PC-9 (cell line): ENCODE measurements at regions of chr9 and their contacts with region 1.

Region 1: GRCh38 chr9:71911253-71912074 is at the start of gene C9orf85:
- DNase-seq: peak; percentile 99
- H3K4me3 ChIP-seq: peak within 1 kb of the TSS; percentile 93
- H3K27ac ChIP-seq: peak within 1 kb of the TSS; percentile 77
- H3K4me1 ChIP-seq: peaks cover 32% of the 10 kb centered on the region
- H3K27me3 ChIP-seq: no peaks in the 10 kb centered on the region
- CTCF ChIP-seq: no peak
- total RNA-seq, gene C9orf85: 16.8 and 19.0 TPM in 2 replicates

Region 2: GRCh38 chr9:71683598-71684235 is 227.7 kb before region 1 on chr9:
- CTCF ChIA-PET with region 1: no interaction called
- POLR2A ChIA-PET with region 1: interaction called, 15 read pairs
- intact Hi-C with region 1: no loop called
- DNase-seq: no peak
- H3K4me3 ChIP-seq: no peak overlapping the region
- H3K27ac ChIP-seq: no peak overlapping the region
- H3K4me1 ChIP-seq: peaks cover 88% of the 10 kb centered on the region
- H3K27me3 ChIP-seq: no peaks in the 10 kb centered on the region
- CTCF ChIP-seq: no peak

Region 3: GRCh38 chr9:71858812-71859211 is 52.7 kb before region 1 on chr9:
- CTCF ChIA-PET with region 1: no interaction called
- POLR2A ChIA-PET with region 1: no interaction called
- intact Hi-C with region 1: no loop called
- DNase-seq: no peak
- H3K4me3 ChIP-seq: no peak overlapping the region
- H3K27ac ChIP-seq: no peak overlapping the region
- H3K4me1 ChIP-seq: no peaks in the 10 kb centered on the region
- H3K27me3 ChIP-seq: no peaks in the 10 kb centered on the region
- CTCF ChIP-seq: no peak

Region 4: DNA sequence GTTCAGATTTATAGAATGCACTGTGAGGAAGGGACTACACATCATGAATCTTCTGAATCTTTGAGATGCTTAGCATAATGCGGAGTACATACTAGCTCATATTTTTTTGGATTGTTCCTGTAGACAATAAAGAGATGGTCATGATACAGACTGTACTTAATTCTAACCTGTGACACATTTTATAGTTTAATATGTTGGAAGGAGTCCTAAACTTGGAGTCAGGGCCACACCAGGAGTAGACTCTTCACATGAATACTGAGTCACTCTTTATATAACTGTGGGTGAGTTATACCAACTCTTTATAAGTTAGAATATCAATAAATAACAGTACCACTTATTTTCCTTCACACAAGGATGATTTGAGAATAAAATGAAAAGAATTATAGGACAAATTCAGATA is 16.9 kb after region 1 on chr9:
- CTCF ChIA-PET with region 1: interaction called, 10 read pairs
- POLR2A ChIA-PET with region 1: interaction called, 5 read pairs
- intact Hi-C with region 1: no loop called
- DNase-seq: no peak
- H3K4me3 ChIP-seq: no peak overlapping the region
- H3K27ac ChIP-seq: no peak overlapping the region
- H3K4me1 ChIP-seq: no peaks in the 10 kb centered on the region; the same call in 1 of the 2 replicates
- H3K27me3 ChIP-seq: no peaks in the 10 kb centered on the region
- CTCF ChIP-seq: no peak

Region 5: GRCh38 chr9:71944475-71945375 is 33.3 kb after region 1 on chr9:
- CTCF ChIA-PET with region 1: no interaction called
- POLR2A ChIA-PET with region 1: no interaction called
- intact Hi-C with region 1: loop called (anchors 2 kb)
- DNase-seq: peak in 1 of 2 experiments; percentile 94
- H3K4me3 ChIP-seq: peak overlapping the region; percentile 28; the same call in 1 of the 2 replicates
- H3K27ac ChIP-seq: peak overlapping the region; percentile 80
- H3K4me1 ChIP-seq: peaks cover 29% of the 10 kb centered on the region
- H3K27me3 ChIP-seq: no peaks in the 10 kb centered on the region
- CTCF ChIP-seq: no peak

Region 6: DNA sequence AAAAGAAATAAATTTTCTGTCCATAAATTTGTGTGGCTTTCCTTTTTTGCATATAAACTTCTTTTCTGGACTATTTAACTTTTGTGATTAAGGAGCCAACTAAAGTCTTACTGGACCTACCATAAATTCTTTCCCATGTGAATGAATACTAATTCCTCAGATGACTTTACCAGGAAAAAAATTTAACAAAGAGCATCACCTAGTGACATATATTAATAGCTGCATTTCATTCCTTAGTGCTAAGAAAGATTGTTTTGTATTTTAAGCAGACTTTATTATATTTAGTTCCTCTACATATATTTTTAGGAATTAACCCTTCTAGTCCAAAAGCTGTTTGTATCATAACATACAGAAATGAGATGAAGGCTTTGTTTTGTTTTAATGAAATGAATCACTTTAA is 64.4 kb after region 1 on chr9:
- CTCF ChIA-PET with region 1: no interaction called
- POLR2A ChIA-PET with region 1: interaction called, 4 read pairs
- intact Hi-C with region 1: loop called (anchors 5 kb)
- DNase-seq: no peak
- H3K4me3 ChIP-seq: no peak overlapping the region
- H3K27ac ChIP-seq: no peak overlapping the region
- H3K4me1 ChIP-seq: no peaks in the 10 kb centered on the region
- H3K27me3 ChIP-seq: no peaks in the 10 kb centered on the region
- CTCF ChIP-seq: peak; percentile 47; the same call in 1 of the 2 replicates

Region 7: GRCh38 chr9:72013292-72013760 is 101.9 kb after region 1 on chr9:
- CTCF ChIA-PET with region 1: no interaction called
- POLR2A ChIA-PET with region 1: interaction called, 4 read pairs
- intact Hi-C with region 1: loop called (anchors 5 kb)
- DNase-seq: no peak
- H3K4me3 ChIP-seq: no peak overlapping the region
- H3K27ac ChIP-seq: no peak overlapping the region
- H3K4me1 ChIP-seq: peaks cover 11% of the 10 kb centered on the region; the same call in 1 of the 2 replicates
- H3K27me3 ChIP-seq: no peaks in the 10 kb centered on the region
- CTCF ChIP-seq: no peak

Region 8: DNA sequence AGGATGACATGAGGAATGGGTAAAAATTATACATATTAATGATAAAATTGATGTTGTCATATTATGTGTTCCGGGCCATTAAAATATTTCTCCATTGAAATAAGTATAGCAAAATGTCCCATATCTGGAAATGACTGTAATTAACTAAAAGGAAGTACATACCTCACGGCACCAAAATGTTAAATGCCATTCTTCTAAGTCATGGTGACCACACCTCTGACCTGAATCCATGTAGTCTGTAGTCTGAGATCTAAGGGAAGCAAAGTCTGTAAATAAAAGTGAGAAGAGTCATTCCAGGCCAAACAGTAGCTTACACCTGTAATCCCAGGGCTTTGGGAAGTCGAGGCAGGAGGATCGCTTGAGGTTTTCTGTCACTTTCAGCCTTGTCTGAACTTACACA is 229.1 kb after region 1 on chr9:
- CTCF ChIA-PET with region 1: no interaction called
- POLR2A ChIA-PET with region 1: no interaction called
- intact Hi-C with region 1: loop called (anchors 5 kb)
- DNase-seq: peak; percentile 52 to 92
- H3K4me3 ChIP-seq: no peak overlapping the region
- H3K27ac ChIP-seq: peak overlapping the region; percentile 81
- H3K4me1 ChIP-seq: peaks cover 41% of the 10 kb centered on the region
- H3K27me3 ChIP-seq: no peaks in the 10 kb centered on the region
- CTCF ChIP-seq: no peak